Activated CD4-positive, alpha-beta T cell treated with anti-CD3 and anti-CD28 coated beads, Interleukin-2, amount 10 ng/mL, durations not matched to agents 7 days and 5 days (primary cell): ENCODE measurements at regions of chr2 and their contacts with region 1.

Region 1: DNA sequence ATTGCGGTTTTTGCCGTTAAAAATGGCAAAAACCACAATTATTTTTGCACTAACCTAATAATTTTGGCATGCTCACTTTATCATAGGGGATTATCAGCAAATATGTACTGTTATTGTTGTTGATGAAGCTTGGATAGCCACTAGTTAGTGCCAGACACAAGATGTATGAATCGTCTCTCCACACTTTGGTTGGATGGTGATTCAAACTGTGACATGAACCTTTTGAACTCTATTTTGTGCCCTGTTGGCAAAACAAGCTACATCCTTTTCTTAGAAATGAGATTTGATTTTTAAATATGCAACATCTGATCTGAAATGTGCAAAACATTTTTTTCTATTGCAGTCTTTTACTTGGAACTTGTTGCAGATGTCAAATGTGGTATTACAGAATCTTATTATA is 48.8 kb upstream of the DTNB start:
- DNase-seq: no peak
- H3K4me3 Mint-ChIP-seq: no peak overlapping the region
- H3K27ac Mint-ChIP-seq: no peak overlapping the region
- H3K4me1 Mint-ChIP-seq: peaks cover 7% of the 10 kb centered on the region
- H3K27me3 Mint-ChIP-seq: peaks cover 8% of the 10 kb centered on the region

Region 2: GRCh38 chr2:25743132-25743830 is 21.1 kb after region 1 on chr2:
- CTCF ChIA-PET with region 1: no interaction called
- POLR2A ChIA-PET with region 1: interaction called, 15 read pairs
- DNase-seq: peak; percentile 19
- H3K4me3 Mint-ChIP-seq: no peak overlapping the region
- H3K27ac Mint-ChIP-seq: peak overlapping the region; percentile 83
- H3K4me1 Mint-ChIP-seq: peaks cover 32% of the 10 kb centered on the region
- H3K27me3 Mint-ChIP-seq: no peaks in the 10 kb centered on the region